IMR-90 (cell line): ENCODE measurements at regions of chr14 and their contacts with region 1.

Region 1: GRCh38 chr14:73568381-73568781 is 632 bp upstream of the ACOT2 start:
- DNase-seq: peak; percentile 41
- ATAC-seq: no peak
- H3K4me3 ChIP-seq: peak overlapping the region; percentile 70; the same call in 1 of the 2 replicates
- H3K27ac ChIP-seq: peak overlapping the region; percentile 92
- H3K4me1 ChIP-seq: peaks cover 9% of the 10 kb centered on the region; the same call in 1 of the 2 replicates
- H3K27me3 ChIP-seq: no peaks in the 10 kb centered on the region
- CTCF ChIP-seq: no peak
- POLR2A ChIP-seq: no peak
- RAD21 ChIP-seq: no peak

Region 2: DNA sequence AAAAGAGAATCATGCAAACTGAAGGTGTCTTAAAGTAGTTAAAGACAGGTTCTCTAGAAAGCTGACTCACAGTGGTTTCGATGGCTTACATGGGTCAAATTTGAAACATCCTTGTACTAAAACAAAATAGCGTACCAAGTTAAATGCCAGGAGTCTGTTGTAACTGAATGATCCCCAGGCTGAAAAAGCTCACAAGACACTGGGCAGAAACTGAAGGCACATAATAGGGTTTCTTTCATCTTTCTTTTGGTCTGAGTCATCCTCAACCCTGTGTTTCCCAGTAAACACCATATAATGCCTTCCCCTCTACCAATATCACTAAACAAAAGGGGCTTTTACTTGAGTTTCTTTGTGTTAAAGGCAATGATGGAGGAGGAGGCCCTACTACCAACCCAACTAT is 554.3 kb before region 1 on chr14:
- CTCF ChIA-PET with region 1: no interaction called
- POLR2A ChIA-PET with region 1: no interaction called
- dilution Hi-C with region 1: no loop called
- in situ Hi-C with region 1: no loop called
- intact Hi-C with region 1: no loop called
- DNase-seq: peak; percentile 83
- ATAC-seq: peak; percentile 84
- H3K4me3 ChIP-seq: no peak overlapping the region
- H3K27ac ChIP-seq: no peak overlapping the region
- H3K4me1 ChIP-seq: peaks cover 4% of the 10 kb centered on the region; the same call in 1 of the 2 replicates
- H3K27me3 ChIP-seq: no peaks in the 10 kb centered on the region
- CTCF ChIP-seq: no peak
- POLR2A ChIP-seq: no peak
- RAD21 ChIP-seq: no peak

Region 3: DNA sequence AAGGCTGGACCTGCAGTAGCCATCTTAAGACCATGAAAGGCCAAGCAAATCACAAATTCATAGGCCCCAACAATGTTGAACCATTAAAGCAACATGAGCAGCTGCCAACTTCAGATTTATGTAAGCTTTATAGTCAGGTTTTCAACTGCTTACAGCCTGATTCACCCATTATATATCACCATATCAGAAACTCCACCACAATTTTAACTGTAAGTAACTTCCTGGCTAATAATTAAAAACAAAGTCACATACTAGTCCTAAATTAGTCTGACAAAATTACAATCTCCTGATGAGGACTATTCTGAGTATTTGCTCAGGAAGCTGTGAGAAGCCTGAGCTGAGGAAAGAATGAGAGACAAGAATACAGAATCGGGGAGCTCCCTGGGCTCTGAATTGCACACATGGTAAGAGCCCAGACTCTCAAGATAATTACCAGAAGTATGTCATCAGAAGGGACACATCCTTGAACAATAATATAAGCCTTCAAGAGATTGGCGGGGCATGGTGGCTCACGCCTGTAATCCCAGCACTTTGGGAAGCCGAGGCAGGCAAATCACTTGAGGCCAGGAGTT is 165.1 kb before region 1 on chr14:
- CTCF ChIA-PET with region 1: no interaction called
- POLR2A ChIA-PET with region 1: no interaction called
- dilution Hi-C with region 1: no loop called
- in situ Hi-C with region 1: no loop called
- intact Hi-C with region 1: no loop called
- DNase-seq: no peak
- ATAC-seq: no peak
- H3K4me3 ChIP-seq: no peak overlapping the region
- H3K27ac ChIP-seq: no peak overlapping the region
- H3K4me1 ChIP-seq: peaks cover 2% of the 10 kb centered on the region; the same call in 1 of the 2 replicates
- H3K27me3 ChIP-seq: no peaks in the 10 kb centered on the region
- CTCF ChIP-seq: no peak
- POLR2A ChIP-seq: no peak
- RAD21 ChIP-seq: no peak

Region 4: GRCh38 chr14:73524493-73524892 is 43.9 kb before region 1 on chr14:
- CTCF ChIA-PET with region 1: interaction called, 3 read pairs
- POLR2A ChIA-PET with region 1: interaction called, 3 read pairs
- dilution Hi-C with region 1: no loop called
- in situ Hi-C with region 1: loop called (anchors 5 kb)
- intact Hi-C with region 1: loop called (anchors 5 kb)
- DNase-seq: no peak
- ATAC-seq: no peak
- H3K4me3 ChIP-seq: no peak overlapping the region
- H3K27ac ChIP-seq: no peak overlapping the region
- H3K4me1 ChIP-seq: peaks cover 2% of the 10 kb centered on the region; the same call in 1 of the 2 replicates
- H3K27me3 ChIP-seq: peaks cover 12% of the 10 kb centered on the region
- CTCF ChIP-seq: no peak
- POLR2A ChIP-seq: no peak
- RAD21 ChIP-seq: no peak